A673 (cell line): ENCODE measurements at regions of chr2 and their contacts with region 1.

Region 1: DNA sequence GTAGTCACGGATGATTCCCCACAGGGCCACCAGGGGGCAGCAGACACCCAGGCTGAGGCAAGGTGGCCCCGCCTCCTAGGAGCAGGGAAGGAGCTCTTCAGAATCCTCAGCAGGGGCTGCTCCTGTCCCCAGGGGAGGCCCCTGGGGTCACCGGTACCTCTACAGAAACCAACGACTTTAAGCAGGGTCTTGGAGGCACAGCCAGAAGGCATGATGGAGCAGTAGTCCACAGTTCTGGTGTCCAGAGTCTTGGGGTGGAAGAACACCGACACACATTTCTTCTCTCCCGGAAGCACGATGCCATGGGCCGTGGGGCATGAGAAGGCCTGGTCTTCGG is 11.5 kb downstream of the CFAP65 start:
- DNase-seq: peak; percentile 86
- H3K4me3 ChIP-seq: no peak overlapping the region
- H3K27ac ChIP-seq: no peak overlapping the region
- H3K4me1 ChIP-seq: no peaks in the 10 kb centered on the region
- H3K27me3 ChIP-seq: peaks cover 22% of the 10 kb centered on the region
- CTCF ChIP-seq: peak; percentile 92

Region 2: DNA sequence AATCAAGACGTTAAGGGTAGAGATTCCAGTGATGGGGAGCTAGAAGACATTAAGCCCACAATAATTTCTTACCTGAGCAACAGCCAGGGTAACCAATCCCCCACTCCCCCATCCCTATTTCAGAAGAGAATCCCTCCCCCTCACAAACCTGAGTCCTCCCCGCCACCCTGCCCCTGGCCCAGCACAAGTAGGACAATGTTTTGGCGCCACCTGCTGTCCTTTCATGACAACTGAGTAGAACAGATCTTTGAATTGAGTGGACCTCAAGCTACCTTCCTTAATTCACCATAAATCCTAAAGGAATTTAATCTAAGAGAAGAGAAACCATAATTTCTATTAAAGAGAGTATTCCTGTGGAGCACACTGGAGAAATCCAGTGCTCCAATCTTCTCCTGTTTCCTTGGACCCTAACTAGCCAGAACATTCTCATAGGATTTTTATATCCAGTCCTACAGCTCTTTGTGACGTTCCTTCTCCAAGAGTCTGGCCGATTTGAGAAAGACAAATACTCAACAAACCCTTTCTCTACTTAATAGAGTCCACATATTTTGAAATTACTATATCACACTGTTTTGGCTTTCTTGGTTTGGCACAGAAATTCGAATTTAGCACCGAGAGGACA is 89.7 kb after region 1 on chr2:
- CTCF ChIA-PET with region 1: interaction called, 21 read pairs
- POLR2A ChIA-PET with region 1: no interaction called
- intact Hi-C with region 1: no loop called
- DNase-seq: peak; percentile 72
- H3K4me3 ChIP-seq: no peak overlapping the region
- H3K27ac ChIP-seq: no peak overlapping the region
- H3K4me1 ChIP-seq: peaks cover 21% of the 10 kb centered on the region
- H3K27me3 ChIP-seq: no peaks in the 10 kb centered on the region
- CTCF ChIP-seq: peak; percentile 89

Region 3: DNA sequence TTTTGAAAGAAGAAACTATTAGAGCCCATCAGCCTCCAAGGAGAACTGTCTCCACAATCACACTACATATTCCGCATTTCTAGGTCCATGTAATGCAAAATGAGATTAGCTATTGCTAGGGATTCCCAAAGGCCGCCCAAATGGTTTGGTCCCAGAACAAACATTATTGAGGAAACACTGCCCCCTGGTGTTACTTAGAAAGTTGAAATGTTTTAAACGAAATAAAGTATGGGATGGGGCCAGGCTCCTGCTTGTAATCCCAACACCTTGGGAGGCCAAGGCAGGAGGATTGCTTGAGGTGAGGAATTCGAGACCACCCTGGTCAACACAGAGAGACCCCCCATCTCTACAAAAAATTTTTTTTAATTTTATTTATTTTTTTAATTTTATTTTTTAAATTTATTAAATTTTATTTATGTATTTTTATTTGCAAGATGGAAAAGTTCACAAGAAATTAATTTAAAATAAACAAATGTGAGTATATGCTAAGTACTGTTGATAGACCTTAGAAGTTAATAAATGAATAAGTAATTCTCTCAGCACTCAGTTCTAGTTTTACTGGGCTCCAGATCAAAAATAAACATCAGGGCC is 125.4 kb after region 1 on chr2:
- CTCF ChIA-PET with region 1: interaction called, 58 read pairs
- POLR2A ChIA-PET with region 1: no interaction called
- intact Hi-C with region 1: loop called (anchors 1 kb)
- DNase-seq: peak; percentile 91
- H3K4me3 ChIP-seq: no peak overlapping the region
- H3K27ac ChIP-seq: no peak overlapping the region
- H3K4me1 ChIP-seq: peaks cover 4% of the 10 kb centered on the region
- H3K27me3 ChIP-seq: no peaks in the 10 kb centered on the region
- CTCF ChIP-seq: peak; percentile 56